GM12878 (cell line): ENCODE measurements at regions of chr19 and their contacts with region 1.

Region 1: DNA sequence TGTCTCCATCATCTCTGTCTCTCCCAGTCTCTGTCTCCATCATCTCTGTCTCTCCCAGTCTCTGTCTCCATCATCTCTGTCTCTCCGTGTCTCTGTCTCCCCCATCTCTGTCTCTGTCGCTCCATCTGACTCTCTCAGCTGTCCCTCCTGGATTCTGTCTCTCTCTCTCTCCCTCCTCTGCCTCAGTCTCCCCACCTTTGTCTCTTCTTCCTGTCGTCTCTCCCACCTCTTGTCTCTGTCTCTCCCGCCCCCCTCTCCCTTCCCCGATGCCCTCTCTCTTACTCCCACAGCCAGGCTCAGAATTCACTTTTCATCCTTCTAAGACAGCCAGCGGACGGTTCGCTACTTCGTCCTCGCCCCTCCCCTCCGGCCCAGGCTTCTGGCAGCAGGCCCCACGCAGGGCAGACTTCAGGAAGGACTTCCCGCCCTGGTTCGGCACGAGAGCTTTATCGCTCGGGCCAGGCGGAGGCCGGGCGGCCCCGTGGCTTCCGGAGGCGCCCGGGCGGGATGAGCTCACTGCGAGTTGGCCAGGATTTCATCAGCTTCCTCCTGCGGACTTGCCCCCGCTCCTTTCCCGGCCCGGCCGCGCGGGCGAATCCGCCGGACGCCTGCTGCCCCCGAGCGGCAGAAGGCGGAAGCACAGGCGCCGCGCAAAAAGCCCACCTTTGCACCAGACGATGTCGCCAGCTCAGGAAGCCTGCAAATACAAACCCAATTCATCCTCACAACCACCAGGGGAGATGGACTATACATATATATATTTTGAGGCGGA is 12.4 kb upstream of the CCDC9 start:
- DNase-seq: no peak
- ATAC-seq: peak; percentile 94
- H3K4me3 ChIP-seq: peak overlapping the region; percentile 54
- H3K27ac ChIP-seq: peak overlapping the region; percentile 65
- H3K4me1 ChIP-seq: peaks cover 29% of the 10 kb centered on the region
- H3K27me3 ChIP-seq: peaks cover 1 to 4% of the 10 kb centered on the region in 2 experiments
- CTCF ChIP-seq: peak; percentile 93 to 99 (median 95); a peak in 5 of 6 replicates
- EP300 ChIP-seq: no peak; a peak in 1 of 4 replicates
- POLR2A ChIP-seq: peak; percentile 85
- RAD21 ChIP-seq: peak; percentile 95

Region 2: DNA sequence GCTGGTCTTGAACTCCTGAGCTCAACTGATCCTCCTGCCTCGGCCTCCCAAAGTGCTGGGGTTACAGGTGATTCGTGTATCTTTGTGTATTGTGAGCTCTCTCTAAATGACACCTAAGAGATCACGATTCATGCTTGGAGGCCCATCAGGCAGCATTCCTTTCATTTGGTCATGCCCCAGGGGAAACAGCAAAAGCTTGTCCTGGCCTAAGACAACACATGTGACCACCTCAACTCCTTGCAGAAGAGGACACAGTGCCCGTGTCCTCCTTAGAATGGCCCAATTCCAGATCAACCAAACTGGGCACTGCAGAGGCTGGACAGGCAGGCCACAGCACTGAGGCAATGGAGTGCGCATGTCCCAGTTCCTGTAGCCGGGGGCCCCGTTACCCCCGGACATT is 162.9 kb before region 1 on chr19:
- CTCF ChIA-PET with region 1: interaction called, 10 read pairs
- POLR2A ChIA-PET with region 1: no interaction called
- RAD21 ChIA-PET with region 1: interaction called, 5 read pairs
- SMC1A ChIA-PET with region 1: no interaction called
- in situ Hi-C with region 1: no loop called
- intact Hi-C with region 1: no loop called
- DNase-seq: no peak
- ATAC-seq: no peak
- H3K4me3 ChIP-seq: no peak overlapping the region
- H3K27ac ChIP-seq: no peak overlapping the region
- H3K4me1 ChIP-seq: no peaks in the 10 kb centered on the region
- H3K27me3 ChIP-seq: no peaks in the 10 kb centered on the region
- CTCF ChIP-seq: no peak
- EP300 ChIP-seq: no peak
- POLR2A ChIP-seq: no peak
- RAD21 ChIP-seq: no peak

Region 3: GRCh38 chr19:47143322-47144073 is 100.5 kb before region 1 on chr19:
- CTCF ChIA-PET with region 1: interaction called, 108 read pairs
- POLR2A ChIA-PET with region 1: interaction called, 4 read pairs
- RAD21 ChIA-PET with region 1: interaction called, 36 read pairs
- SMC1A ChIA-PET with region 1: interaction called, 6 read pairs
- in situ Hi-C with region 1: loop called (anchors 5 kb)
- intact Hi-C with region 1: no loop called
- DNase-seq: no peak
- ATAC-seq: no peak
- H3K4me3 ChIP-seq: no peak overlapping the region
- H3K27ac ChIP-seq: no peak overlapping the region
- H3K4me1 ChIP-seq: no peaks in the 10 kb centered on the region
- H3K27me3 ChIP-seq: no peaks in the 10 kb centered on the region
- CTCF ChIP-seq: no peak
- EP300 ChIP-seq: no peak
- POLR2A ChIP-seq: no peak
- RAD21 ChIP-seq: no peak

Region 4: GRCh38 chr19:47168065-47168464 is 75.9 kb before region 1 on chr19:
- CTCF ChIA-PET with region 1: interaction called, 12 read pairs
- POLR2A ChIA-PET with region 1: no interaction called
- RAD21 ChIA-PET with region 1: interaction called, 6 read pairs
- SMC1A ChIA-PET with region 1: interaction called, 6 read pairs
- in situ Hi-C with region 1: no loop called
- intact Hi-C with region 1: no loop called
- DNase-seq: no peak
- ATAC-seq: no peak
- H3K4me3 ChIP-seq: no peak overlapping the region
- H3K27ac ChIP-seq: no peak overlapping the region
- H3K4me1 ChIP-seq: no peaks in the 10 kb centered on the region
- H3K27me3 ChIP-seq: no peaks in the 10 kb centered on the region
- CTCF ChIP-seq: no peak
- EP300 ChIP-seq: no peak
- POLR2A ChIP-seq: no peak
- RAD21 ChIP-seq: no peak

Region 5: GRCh38 chr19:47210689-47211316 is 33.2 kb before region 1 on chr19:
- CTCF ChIA-PET with region 1: interaction called, 473 read pairs
- POLR2A ChIA-PET with region 1: interaction called, 66 read pairs
- RAD21 ChIA-PET with region 1: interaction called, 255 read pairs
- SMC1A ChIA-PET with region 1: interaction called, 211 read pairs
- in situ Hi-C with region 1: loop called (anchors 5 kb)
- intact Hi-C with region 1: loop called (anchors 1 kb)
- DNase-seq: no peak
- ATAC-seq: peak; percentile 82
- H3K4me3 ChIP-seq: no peak overlapping the region
- H3K27ac ChIP-seq: no peak overlapping the region
- H3K4me1 ChIP-seq: 0 out of 2 replicates have a peak, but pooled peaks cover 2% of the 10 kb centered on the region
- H3K27me3 ChIP-seq: no peaks in the 10 kb centered on the region
- CTCF ChIP-seq: peak; percentile 74 to 90 (median 82); a peak in 5 of 6 replicates
- EP300 ChIP-seq: no peak
- POLR2A ChIP-seq: 0 out of 2 replicates have a peak, but pooled peaks have one; percentile 29
- RAD21 ChIP-seq: peak; percentile 80

Region 6: GRCh38 chr19:47256688-47257443 is 12.9 kb after region 1 on chr19:
- CTCF ChIA-PET with region 1: interaction called, 57 read pairs
- POLR2A ChIA-PET with region 1: interaction called, 26 read pairs
- RAD21 ChIA-PET with region 1: interaction called, 23 read pairs
- SMC1A ChIA-PET with region 1: interaction called, 8 read pairs
- in situ Hi-C with region 1: no loop called
- intact Hi-C with region 1: no loop called
- DNase-seq: peak; percentile 92
- ATAC-seq: peak; percentile 91
- H3K4me3 ChIP-seq: peak overlapping the region; percentile 93; the same call in 1 of the 2 replicates
- H3K27ac ChIP-seq: peak overlapping the region; percentile 86
- H3K4me1 ChIP-seq: peaks cover 8% of the 10 kb centered on the region
- H3K27me3 ChIP-seq: no peaks in the 10 kb centered on the region
- CTCF ChIP-seq: no peak
- EP300 ChIP-seq: no peak
- POLR2A ChIP-seq: peak; percentile 10; the same call in 1 of the 2 replicates
- RAD21 ChIP-seq: no peak